A673 (cell line): ENCODE measurements at regions of chr1 and their contacts with region 1.

Region 1: GRCh38 chr1:27372808-27373690 is 1.6 kb downstream of the FCN3 start:
- DNase-seq: no peak
- H3K4me3 ChIP-seq: no peak overlapping the region
- H3K27ac ChIP-seq: no peak overlapping the region
- H3K4me1 ChIP-seq: no peaks in the 10 kb centered on the region
- H3K27me3 ChIP-seq: no peaks in the 10 kb centered on the region
- CTCF ChIP-seq: 0 out of 2 replicates have a peak, but pooled peaks have one; percentile 36

Region 2: GRCh38 chr1:27306892-27307761 is 65.9 kb before region 1 on chr1:
- CTCF ChIA-PET with region 1: interaction called, 12 read pairs
- POLR2A ChIA-PET with region 1: interaction called, 16 read pairs
- intact Hi-C with region 1: no loop called
- DNase-seq: no peak
- H3K4me3 ChIP-seq: no peak overlapping the region
- H3K27ac ChIP-seq: no peak overlapping the region
- H3K4me1 ChIP-seq: no peaks in the 10 kb centered on the region
- H3K27me3 ChIP-seq: no peaks in the 10 kb centered on the region
- CTCF ChIP-seq: no peak